ENCODE measurements at regions of chr17 and their contacts with region 1.

Region 1: DNA sequence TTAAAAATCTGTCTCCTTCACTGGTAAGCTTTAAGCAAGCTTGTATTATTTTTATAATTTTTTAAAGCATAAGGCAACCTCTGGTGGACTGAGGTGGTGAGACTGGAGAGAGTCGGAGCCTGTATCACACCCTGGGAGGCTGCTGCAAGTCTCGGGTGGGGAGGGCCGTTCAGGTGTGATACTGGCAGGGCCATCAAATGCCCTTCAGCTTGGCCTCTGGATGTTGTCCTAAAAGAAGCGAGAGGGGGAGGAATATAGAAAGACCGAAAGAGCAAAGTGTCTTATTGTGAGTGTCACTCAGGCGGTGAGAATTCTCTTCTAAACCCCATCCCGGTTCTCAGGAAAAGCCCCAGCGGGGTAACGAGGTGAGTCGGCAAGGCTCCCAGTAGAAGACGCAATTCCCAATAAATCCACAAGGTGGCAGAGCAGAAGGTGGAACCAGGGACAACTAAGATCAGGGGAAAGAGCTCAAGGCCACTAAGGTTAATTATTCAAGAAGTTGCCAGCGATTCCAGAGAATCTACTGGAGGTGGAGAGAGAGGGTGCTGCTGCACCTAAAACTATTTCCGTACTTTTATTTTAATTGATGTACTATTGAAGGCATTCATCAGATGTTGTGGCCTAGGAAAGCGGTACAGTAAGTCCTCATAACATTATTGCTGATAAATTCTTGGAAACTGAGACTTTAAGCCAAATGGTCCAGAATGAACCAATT is 14.1 kb downstream of the C17orf67 start:
- DNase-seq: peak; percentile 83
- ATAC-seq: peak; percentile 97
- H3K4me3 Mint-ChIP-seq: no peak overlapping the region
- H3K27ac Mint-ChIP-seq: no peak overlapping the region
- H3K4me1 Mint-ChIP-seq: peaks cover 15% of the 10 kb centered on the region
- H3K27me3 Mint-ChIP-seq: no peaks in the 10 kb centered on the region
- CTCF ChIP-seq: peak; percentile 93

Region 2: GRCh38 chr17:56679115-56679766 is 140.3 kb before region 1 on chr17:
- CTCF ChIA-PET with region 1: no interaction called
- POLR2A ChIA-PET with region 1: no interaction called
- intact Hi-C with region 1: no loop called
- DNase-seq: peak; percentile 20
- ATAC-seq: peak; percentile 24
- H3K4me3 Mint-ChIP-seq: peak overlapping the region; percentile 56
- H3K27ac Mint-ChIP-seq: no peak overlapping the region
- H3K4me1 Mint-ChIP-seq: peaks cover 22% of the 10 kb centered on the region
- H3K27me3 Mint-ChIP-seq: peaks cover 38% of the 10 kb centered on the region
- CTCF ChIP-seq: peak; percentile 73

Region 3: DNA sequence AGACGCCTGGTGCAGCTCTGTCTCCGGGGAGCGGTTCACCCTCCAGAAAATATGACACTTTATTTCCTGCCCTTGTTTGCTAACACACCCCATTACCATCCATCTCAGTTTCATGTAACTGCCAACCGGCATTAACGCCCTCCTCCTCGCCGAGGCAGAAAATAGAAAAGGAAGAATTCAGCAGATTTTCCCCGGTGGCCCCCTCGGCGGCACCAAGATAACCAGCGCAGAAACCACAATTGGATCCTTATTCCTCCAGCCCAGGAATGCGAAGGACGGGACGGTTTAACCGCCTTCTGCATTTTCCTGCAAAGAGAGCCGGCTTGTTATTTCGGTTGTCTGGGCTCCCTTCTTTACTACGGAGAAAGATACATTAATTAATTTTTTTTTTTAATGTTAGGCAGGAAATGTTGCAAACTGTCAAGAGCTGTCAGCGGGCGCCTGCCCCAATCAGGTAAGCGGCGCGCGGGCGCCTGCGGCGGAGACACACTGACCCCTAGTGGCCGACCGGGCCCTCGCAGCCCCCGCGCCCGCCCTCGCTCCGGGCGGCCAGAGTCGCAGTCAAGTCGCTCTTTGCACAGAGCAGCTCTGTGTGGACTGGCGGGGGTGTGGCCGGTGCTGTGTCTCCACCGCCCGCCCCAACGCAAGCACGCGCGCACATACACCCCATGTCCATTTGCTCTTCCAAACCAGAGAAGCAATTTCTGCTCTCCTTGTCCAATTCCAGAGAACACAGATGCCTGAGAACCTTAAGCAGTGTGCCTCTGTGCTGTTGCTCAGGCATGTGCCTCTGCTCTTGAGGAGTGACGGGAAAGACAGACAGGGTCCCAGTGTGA is 39.5 kb before region 1 on chr17:
- CTCF ChIA-PET with region 1: interaction called, 12 read pairs
- POLR2A ChIA-PET with region 1: no interaction called
- intact Hi-C with region 1: no loop called
- DNase-seq: peak; percentile 89
- ATAC-seq: peak; percentile 94
- H3K4me3 Mint-ChIP-seq: peak overlapping the region; percentile 75
- H3K27ac Mint-ChIP-seq: peak overlapping the region; percentile 85
- H3K4me1 Mint-ChIP-seq: peaks cover 27% of the 10 kb centered on the region
- H3K27me3 Mint-ChIP-seq: no peaks in the 10 kb centered on the region
- CTCF ChIP-seq: peak; percentile 99

Region 4: DNA sequence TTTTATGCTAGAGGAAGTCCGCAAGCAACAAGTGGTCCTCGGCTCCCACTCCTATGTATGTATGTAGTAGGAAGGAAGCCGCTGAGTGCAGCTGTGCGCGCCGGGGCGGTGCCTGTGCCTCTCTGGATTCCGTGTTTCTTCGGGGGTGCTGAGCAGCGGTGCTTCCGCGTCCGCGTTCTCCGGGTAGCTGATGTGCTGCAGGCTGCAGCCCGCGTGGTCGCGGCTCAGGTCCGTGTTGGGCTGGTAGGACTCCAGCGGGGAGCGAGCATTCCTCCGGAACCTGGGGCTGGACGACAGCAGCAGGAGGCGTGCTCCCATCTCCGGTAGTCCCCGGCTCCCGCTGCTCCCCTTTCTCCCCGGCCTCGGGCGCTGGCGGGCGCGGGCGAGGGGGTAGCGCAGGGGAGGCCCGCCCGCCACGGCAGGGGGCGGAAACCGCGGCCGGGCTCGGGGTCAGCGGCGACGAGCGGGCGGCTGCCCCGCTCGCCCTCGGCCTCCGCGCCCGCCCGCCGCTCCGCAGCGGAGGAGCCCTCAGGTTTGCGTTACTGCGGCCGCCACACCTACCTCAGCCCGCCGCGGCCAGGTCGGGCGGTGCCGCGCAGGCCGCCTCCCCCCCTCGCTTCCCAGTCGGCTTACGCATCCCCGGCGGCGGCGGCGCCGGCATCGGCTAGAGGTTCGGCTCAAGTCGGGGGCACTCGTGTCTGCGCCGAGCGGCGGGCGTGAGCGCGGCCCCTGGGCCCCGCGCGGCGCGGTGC is 13.6 kb after region 1 on chr17:
- CTCF ChIA-PET with region 1: interaction called, 21 read pairs
- POLR2A ChIA-PET with region 1: interaction called, 5 read pairs
- intact Hi-C with region 1: no loop called
- DNase-seq: peak; percentile 75
- ATAC-seq: peak; percentile 62
- H3K4me3 Mint-ChIP-seq: peak overlapping the region; percentile 94
- H3K27ac Mint-ChIP-seq: peak overlapping the region; percentile 85
- H3K4me1 Mint-ChIP-seq: peaks cover 47% of the 10 kb centered on the region
- H3K27me3 Mint-ChIP-seq: no peaks in the 10 kb centered on the region
- CTCF ChIP-seq: no peak

Region 5: GRCh38 chr17:56867948-56868376 is 48.4 kb after region 1 on chr17:
- CTCF ChIA-PET with region 1: interaction called, 16 read pairs
- POLR2A ChIA-PET with region 1: no interaction called
- intact Hi-C with region 1: no loop called
- DNase-seq: no peak
- ATAC-seq: no peak
- H3K4me3 Mint-ChIP-seq: no peak overlapping the region
- H3K27ac Mint-ChIP-seq: no peak overlapping the region
- H3K4me1 Mint-ChIP-seq: peaks cover 9% of the 10 kb centered on the region
- H3K27me3 Mint-ChIP-seq: no peaks in the 10 kb centered on the region
- CTCF ChIP-seq: no peak

Region 6: DNA sequence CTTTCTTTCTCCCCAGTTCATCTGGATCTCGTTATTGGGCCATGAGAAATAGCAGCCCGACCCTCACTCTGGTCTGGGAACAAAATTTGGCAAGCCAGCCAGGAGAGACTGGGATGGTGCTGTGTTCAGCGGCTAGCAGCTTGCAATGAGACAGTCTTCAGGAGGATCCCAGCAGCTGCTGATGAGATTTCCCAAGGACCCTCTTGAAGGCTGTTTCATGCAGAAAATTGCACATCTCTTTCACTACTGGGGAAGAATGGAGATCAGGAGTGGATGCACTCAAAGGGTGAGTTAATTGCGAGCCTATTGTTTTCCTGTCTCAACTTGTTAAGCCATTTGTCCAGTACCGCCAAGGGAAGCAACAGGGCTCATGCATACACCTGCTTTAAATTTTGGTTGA is 146.8 kb after region 1 on chr17:
- CTCF ChIA-PET with region 1: interaction called, 12 read pairs
- POLR2A ChIA-PET with region 1: no interaction called
- intact Hi-C with region 1: no loop called
- DNase-seq: no peak
- ATAC-seq: no peak
- H3K4me3 Mint-ChIP-seq: no peak overlapping the region
- H3K27ac Mint-ChIP-seq: no peak overlapping the region
- H3K4me1 Mint-ChIP-seq: no peaks in the 10 kb centered on the region
- H3K27me3 Mint-ChIP-seq: no peaks in the 10 kb centered on the region
- CTCF ChIP-seq: no peak

Measured in activated CD8-positive, alpha-beta T cell treated with anti-CD3 and anti-CD28 coated beads for 36 hours (primary cell).